CD14-positive monocyte (primary cell): ENCODE measurements at regions of chr2 and their contacts with region 1.

Region 1: DNA sequence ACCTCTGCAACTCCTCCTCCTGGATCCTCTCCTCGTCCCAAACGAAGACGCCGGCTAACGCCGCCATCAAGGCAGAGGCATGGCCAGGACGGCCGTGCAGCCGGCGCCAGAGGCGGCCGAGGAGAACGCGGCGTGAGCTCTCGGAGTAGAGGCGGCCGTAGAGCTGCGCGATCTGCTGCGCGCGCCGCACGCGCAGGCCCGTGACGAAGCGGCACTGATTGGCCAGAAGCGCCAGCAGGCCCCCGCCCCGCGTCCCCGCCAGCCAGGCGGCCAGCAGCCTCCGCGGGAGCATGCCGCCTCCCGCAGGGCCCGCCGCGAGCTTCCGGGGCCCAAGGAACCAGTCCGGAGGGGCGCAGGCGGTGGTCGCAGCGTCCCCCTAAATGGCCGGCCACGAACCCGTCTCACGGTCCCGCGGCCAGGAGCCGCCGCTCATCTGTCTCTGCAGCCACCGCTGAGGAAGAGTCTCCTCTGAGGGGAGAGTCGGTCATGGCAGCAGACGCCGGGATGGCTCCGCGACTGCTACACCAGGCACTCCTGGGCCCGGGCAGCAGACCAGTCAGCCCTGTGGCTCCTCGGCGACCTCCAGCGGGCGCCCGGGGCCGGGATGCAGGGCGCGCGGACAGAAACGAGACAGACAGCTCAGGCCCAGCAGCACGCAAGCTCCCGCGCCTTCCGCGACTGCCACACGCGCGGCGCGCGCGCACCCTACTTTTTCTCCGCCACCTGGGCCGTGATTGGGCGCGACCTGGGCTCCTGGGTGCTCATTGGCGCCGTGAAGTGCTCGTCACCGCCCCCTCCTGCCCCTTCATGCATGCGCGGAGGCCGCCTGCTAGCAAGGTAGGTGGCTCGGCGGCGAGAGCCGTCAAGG is at the start of gene STARD7:
- DNase-seq: peak; percentile 91 to 95 (median 95)
- H3K4me3 ChIP-seq: peak within 1 kb of the TSS; percentile 48 to 78 (median 62)
- H3K4me3 Mint-ChIP-seq: peak within 1 kb of the TSS; percentile 94 to 95
- H3K27ac ChIP-seq: peak within 1 kb of the TSS; percentile 73 to 78
- H3K27ac Mint-ChIP-seq: peak within 1 kb of the TSS; percentile 85 to 97 (median 93)
- H3K4me1 ChIP-seq: peaks cover 56 to 57% of the 10 kb centered on the region in 2 donors
- H3K4me1 Mint-ChIP-seq: peaks cover 57% of the 10 kb centered on the region
- H3K27me3 ChIP-seq: no peaks in the 10 kb centered on the region
- H3K27me3 Mint-ChIP-seq: peaks cover 0 to 1% (median 0%) of the 10 kb centered on the region in 3 donors
- CTCF ChIP-seq: peak; percentile 10
- polyA plus RNA-seq, gene STARD7: 38.0 to 179 (median 172) TPM

Region 2: GRCh38 chr2:96225016-96225533 is 16.7 kb after region 1 on chr2:
- intact Hi-C with region 1: loop called in 1 of 2 experiments (anchors 1 kb)
- DNase-seq: peak; percentile 60 to 96 (median 87)
- H3K4me3 ChIP-seq: peak overlapping the region in 1 of 3 experiments; percentile 51
- H3K4me3 Mint-ChIP-seq: peak overlapping the region in 1 of 2 donors; percentile 33
- H3K27ac ChIP-seq: peak overlapping the region; percentile 89 to 90
- H3K27ac Mint-ChIP-seq: peak overlapping the region; percentile 78 to 97 (median 96)
- H3K4me1 ChIP-seq: peaks cover 40% of the 10 kb centered on the region in 2 donors
- H3K4me1 Mint-ChIP-seq: peaks cover 40% of the 10 kb centered on the region
- H3K27me3 ChIP-seq: no peaks in the 10 kb centered on the region
- H3K27me3 Mint-ChIP-seq: no peaks in the 10 kb centered on the region
- CTCF ChIP-seq: no peak

Region 3: GRCh38 chr2:96241900-96242611 is 33.7 kb after region 1 on chr2:
- intact Hi-C with region 1: loop called in 1 of 2 experiments (anchors 5 kb)
- DNase-seq: peak; percentile 92 to 97 (median 96)
- H3K4me3 ChIP-seq: peak overlapping the region; percentile 0 to 63 (median 24)
- H3K4me3 Mint-ChIP-seq: peak overlapping the region; percentile 60 to 83
- H3K27ac ChIP-seq: peak overlapping the region; percentile 78 to 97
- H3K27ac Mint-ChIP-seq: peak overlapping the region; percentile 98 to 100 (median 98)
- H3K4me1 ChIP-seq: peaks cover 73 to 79% of the 10 kb centered on the region in 2 donors
- H3K4me1 Mint-ChIP-seq: peaks cover 74% of the 10 kb centered on the region
- H3K27me3 ChIP-seq: no peaks in the 10 kb centered on the region
- H3K27me3 Mint-ChIP-seq: no peaks in the 10 kb centered on the region
- CTCF ChIP-seq: no peak

Region 4: GRCh38 chr2:96258166-96259022 is 50.0 kb after region 1 on chr2:
- intact Hi-C with region 1: no loop called
- DNase-seq: peak; percentile 49 to 81 (median 56)
- H3K4me3 ChIP-seq: peak overlapping the region in 1 of 3 experiments; percentile 67
- H3K4me3 Mint-ChIP-seq: peak overlapping the region; percentile 50 to 85
- H3K27ac ChIP-seq: peak overlapping the region; percentile 94 to 99
- H3K27ac Mint-ChIP-seq: peak overlapping the region; percentile 97 to 100 (median 98)
- H3K4me1 ChIP-seq: peaks cover 84 to 91% of the 10 kb centered on the region in 2 donors
- H3K4me1 Mint-ChIP-seq: peaks cover 90% of the 10 kb centered on the region
- H3K27me3 ChIP-seq: no peaks in the 10 kb centered on the region
- H3K27me3 Mint-ChIP-seq: peaks cover 0 to 5% (median 0%) of the 10 kb centered on the region in 3 donors
- CTCF ChIP-seq: no peak